Breast epithelium (tissue), 4 donors: ENCODE measurements at regions of chr2 and their contacts with region 1.

Region 1: DNA sequence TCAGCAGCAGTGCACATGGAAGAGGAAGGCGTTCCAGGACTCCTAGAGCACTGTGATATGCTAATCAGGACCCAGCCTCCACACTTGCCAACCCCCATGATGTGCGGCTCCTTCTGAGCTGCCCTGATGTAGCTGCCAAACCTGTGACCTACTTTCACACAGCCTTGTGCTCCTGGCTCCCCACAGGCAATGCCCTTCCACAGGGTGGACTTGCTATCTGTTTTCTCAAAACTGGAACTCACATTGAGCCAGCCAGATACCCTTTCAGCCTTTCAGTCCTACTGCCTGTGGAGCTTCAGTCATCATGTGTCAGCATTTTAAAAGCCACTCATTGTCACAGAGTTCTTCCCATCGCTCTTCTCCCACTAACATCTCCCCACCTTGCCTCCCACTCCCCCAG is 181.6 kb downstream of the AFF3 start:
- DNase-seq: no peak
- H3K4me3 ChIP-seq: no peak overlapping the region
- H3K27ac ChIP-seq: no peak overlapping the region
- H3K4me1 ChIP-seq: no peaks in the 10 kb centered on the region
- H3K27me3 ChIP-seq: no peaks in the 10 kb centered on the region
- CTCF ChIP-seq: no peak
- POLR2A ChIP-seq: no peak

Region 2: DNA sequence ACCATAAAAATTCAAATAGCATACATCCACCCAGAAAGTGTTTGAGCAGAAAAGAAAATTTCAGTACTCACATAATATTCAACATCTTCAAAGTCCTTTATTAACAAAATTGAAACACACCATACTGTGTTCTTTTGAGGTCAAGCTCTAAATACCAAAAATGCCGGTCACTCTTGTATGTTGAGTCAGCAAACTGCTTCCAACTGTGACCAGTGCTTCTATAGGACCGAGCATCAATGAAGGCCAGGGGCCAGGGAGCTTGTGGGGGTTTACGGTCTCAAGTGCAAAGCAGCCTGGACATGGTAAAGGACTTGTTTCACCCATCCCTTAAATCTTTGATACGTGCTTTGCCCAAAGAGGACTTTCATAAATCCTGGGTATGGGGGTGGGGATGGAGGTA is 358.3 kb before region 1 on chr2:
- intact Hi-C with region 1: loop called (anchors 10 kb)
- DNase-seq: no peak
- H3K4me3 ChIP-seq: no peak overlapping the region
- H3K27ac ChIP-seq: no peak overlapping the region
- H3K4me1 ChIP-seq: no peaks in the 10 kb centered on the region
- H3K27me3 ChIP-seq: no peaks in the 10 kb centered on the region
- CTCF ChIP-seq: no peak
- POLR2A ChIP-seq: no peak

Region 3: GRCh38 chr2:99911736-99912135 is 49.1 kb before region 1 on chr2:
- intact Hi-C with region 1: no loop called
- DNase-seq: no peak
- H3K4me3 ChIP-seq: no peak overlapping the region
- H3K27ac ChIP-seq: no peak overlapping the region
- H3K4me1 ChIP-seq: no peaks in the 10 kb centered on the region
- H3K27me3 ChIP-seq: no peaks in the 10 kb centered on the region
- CTCF ChIP-seq: no peak
- POLR2A ChIP-seq: no peak